ENCODE measurements at regions of chr12 and their contacts with region 1.

Region 1: DNA sequence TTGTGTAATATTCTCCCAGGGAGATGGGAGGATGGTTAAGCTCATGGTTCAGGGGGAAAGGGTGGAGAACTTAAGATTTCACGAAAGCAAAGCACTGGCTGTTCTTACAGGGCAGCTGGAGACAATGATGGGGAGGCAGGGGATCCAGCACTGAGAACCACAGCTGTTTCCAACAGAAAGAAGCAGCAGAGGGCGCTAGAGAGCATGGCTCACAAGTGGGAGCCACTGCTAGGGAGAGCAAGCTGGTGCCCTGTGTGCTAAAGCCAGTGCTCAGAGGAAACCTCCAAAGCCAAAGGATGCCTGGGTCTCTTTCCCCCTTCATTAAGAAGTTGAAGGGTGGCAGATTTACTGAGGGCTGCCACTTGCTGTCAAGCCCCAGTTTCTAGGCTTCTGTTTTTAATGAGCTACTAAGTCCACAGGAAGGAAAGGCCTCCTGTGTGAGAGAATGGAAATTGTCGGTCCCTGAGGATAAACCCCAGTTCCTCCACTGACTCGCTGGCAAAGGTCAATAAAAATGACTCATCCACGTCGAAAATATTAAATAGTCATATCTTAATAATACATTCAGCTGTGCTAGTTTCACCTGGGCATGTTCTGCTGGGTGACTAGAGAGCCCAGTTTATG is 199.7 kb downstream of the ANO2 start:
- DNase-seq: no peak
- ATAC-seq: peak; percentile 92
- H3K4me3 ChIP-seq: no peak overlapping the region
- H3K27ac ChIP-seq: no peak overlapping the region
- H3K4me1 ChIP-seq: no peaks in the 10 kb centered on the region
- H3K27me3 ChIP-seq: peaks cover 0 to 2% of the 10 kb centered on the region in 2 experiments; a peak in 1 of 4 replicates
- CTCF ChIP-seq: peak; percentile 67 to 88 (median 67)
- EP300 ChIP-seq: no peak
- POLR2A ChIP-seq: no peak
- RAD21 ChIP-seq: peak; percentile 33; the same call in 1 of the 2 replicates

Region 2: GRCh38 chr12:5733136-5733755 is 12.1 kb before region 1 on chr12:
- CTCF ChIA-PET with region 1: interaction called, 26 read pairs
- POLR2A ChIA-PET with region 1: no interaction called
- RAD21 ChIA-PET with region 1: no interaction called
- SMC1A ChIA-PET with region 1: interaction called, 3 read pairs
- in situ Hi-C with region 1: no loop called
- intact Hi-C with region 1: no loop called
- DNase-seq: no peak
- ATAC-seq: no peak
- H3K4me3 ChIP-seq: no peak overlapping the region
- H3K27ac ChIP-seq: no peak overlapping the region
- H3K4me1 ChIP-seq: no peaks in the 10 kb centered on the region
- H3K27me3 ChIP-seq: no peaks in the 10 kb centered on the region
- CTCF ChIP-seq: no peak
- EP300 ChIP-seq: no peak
- POLR2A ChIP-seq: no peak
- RAD21 ChIP-seq: no peak

Region 3: GRCh38 chr12:5756338-5756842 is 11.0 kb after region 1 on chr12:
- CTCF ChIA-PET with region 1: interaction called, 17 read pairs
- POLR2A ChIA-PET with region 1: no interaction called
- RAD21 ChIA-PET with region 1: no interaction called
- SMC1A ChIA-PET with region 1: interaction called, 3 read pairs
- in situ Hi-C with region 1: no loop called
- intact Hi-C with region 1: no loop called
- DNase-seq: no peak
- ATAC-seq: no peak
- H3K4me3 ChIP-seq: no peak overlapping the region
- H3K27ac ChIP-seq: no peak overlapping the region
- H3K4me1 ChIP-seq: no peaks in the 10 kb centered on the region
- H3K27me3 ChIP-seq: no peaks in the 10 kb centered on the region
- CTCF ChIP-seq: no peak
- EP300 ChIP-seq: no peak
- POLR2A ChIP-seq: no peak
- RAD21 ChIP-seq: no peak

Region 4: GRCh38 chr12:6383572-6384498 is 638.5 kb after region 1 on chr12 and contains the start of gene LTBR:
- CTCF ChIA-PET with region 1: no interaction called
- POLR2A ChIA-PET with region 1: no interaction called
- RAD21 ChIA-PET with region 1: no interaction called
- SMC1A ChIA-PET with region 1: no interaction called
- in situ Hi-C with region 1: no loop called
- intact Hi-C with region 1: no loop called
- DNase-seq: no peak
- ATAC-seq: peak; percentile 19; the same call in 2 of the 3 replicates
- H3K4me3 ChIP-seq: peak within 1 kb of the TSS; percentile 27; the same call in 1 of the 2 replicates
- H3K27ac ChIP-seq: no peak within 1 kb of the TSS
- H3K4me1 ChIP-seq: no peaks in the 10 kb centered on the region
- H3K27me3 ChIP-seq: peaks cover 13 to 15% of the 10 kb centered on the region in 2 experiments; a peak in 3 of 4 replicates
- CTCF ChIP-seq: no peak
- EP300 ChIP-seq: no peak
- POLR2A ChIP-seq: no peak
- RAD21 ChIP-seq: no peak
- polyA plus RNA-seq, gene LTBR: not detected